Activated T-helper 1 cell treated with anti-CD3 and anti-CD28 coated beads, Interleukin-12 subunit alpha, Interleukin-12 subunit beta, Interleukin-2, Interleukin-4 antibody, amounts not matched to agents 30 ng/mL and 10 ng/mL and 1 ng/mL, durations not matched to agents 14 hours and 24 hours and 36 hours (primary cell): ENCODE measurements at regions of chr5 and their contacts with region 1.

Region 1: GRCh38 chr5:40679155-40679913 is 381 bp upstream of the PTGER4 start:
- DNase-seq: peak; percentile 91
- H3K4me3 Mint-ChIP-seq: peak overlapping the region; percentile 99
- H3K27ac Mint-ChIP-seq: peak overlapping the region; percentile 99
- H3K4me1 Mint-ChIP-seq: peaks cover 66% of the 10 kb centered on the region
- H3K27me3 Mint-ChIP-seq: no peaks in the 10 kb centered on the region

Region 2: DNA sequence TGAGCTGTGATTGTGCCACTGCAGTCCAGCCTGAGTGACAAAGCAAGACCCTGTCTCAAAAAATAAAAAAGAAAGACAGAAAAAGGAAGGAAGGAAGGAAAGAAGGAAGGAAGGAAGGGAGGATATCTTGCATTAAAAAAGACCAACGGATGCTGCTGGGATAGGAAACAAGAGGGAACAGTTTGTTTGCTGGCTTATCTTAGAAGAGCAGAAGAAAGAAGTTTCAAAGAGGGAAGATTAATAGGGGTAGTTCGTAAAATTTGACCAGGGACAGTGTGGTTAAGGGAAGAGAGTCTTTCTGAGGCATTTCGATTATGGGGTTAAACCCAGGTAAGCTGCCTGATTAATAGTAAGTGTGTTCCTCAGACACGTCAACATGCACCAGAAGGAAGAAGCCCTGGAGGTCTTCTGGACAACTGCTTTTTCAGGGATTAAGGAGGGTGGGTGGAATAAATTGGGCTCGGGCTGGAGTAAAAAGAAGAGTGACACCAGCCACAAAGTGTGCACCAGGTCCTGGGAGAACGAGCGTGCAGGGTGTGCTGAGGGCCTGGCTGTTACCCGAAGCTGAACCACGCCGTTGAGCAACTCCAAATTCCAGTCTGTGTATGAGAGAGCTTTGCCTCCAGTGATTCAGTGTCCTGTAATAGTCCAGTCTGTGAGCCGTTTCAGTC is 1484.7 kb before region 1 on chr5:
- intact Hi-C with region 1: loop called (anchors 5 kb)
- DNase-seq: no peak
- H3K4me3 Mint-ChIP-seq: peak overlapping the region; percentile 83
- H3K27ac Mint-ChIP-seq: peak overlapping the region; percentile 90
- H3K4me1 Mint-ChIP-seq: peaks cover 87% of the 10 kb centered on the region
- H3K27me3 Mint-ChIP-seq: no peaks in the 10 kb centered on the region

Region 3: GRCh38 chr5:40404613-40405012 is 274.7 kb before region 1 on chr5:
- intact Hi-C with region 1: loop called (anchors 1 kb)
- DNase-seq: peak; percentile 12
- H3K4me3 Mint-ChIP-seq: peak overlapping the region; percentile 59
- H3K27ac Mint-ChIP-seq: peak overlapping the region; percentile 99
- H3K4me1 Mint-ChIP-seq: peaks cover 86% of the 10 kb centered on the region
- H3K27me3 Mint-ChIP-seq: no peaks in the 10 kb centered on the region

Region 4: GRCh38 chr5:40437452-40437861 is 241.9 kb before region 1 on chr5:
- intact Hi-C with region 1: loop called (anchors 1 kb)
- DNase-seq: no peak
- H3K4me3 Mint-ChIP-seq: peak overlapping the region; percentile 13
- H3K27ac Mint-ChIP-seq: peak overlapping the region; percentile 71
- H3K4me1 Mint-ChIP-seq: peaks cover 84% of the 10 kb centered on the region
- H3K27me3 Mint-ChIP-seq: no peaks in the 10 kb centered on the region

Region 5: GRCh38 chr5:40557501-40557900 is 121.8 kb before region 1 on chr5:
- intact Hi-C with region 1: no loop called
- DNase-seq: no peak
- H3K4me3 Mint-ChIP-seq: no peak overlapping the region
- H3K27ac Mint-ChIP-seq: no peak overlapping the region
- H3K4me1 Mint-ChIP-seq: peaks cover 15% of the 10 kb centered on the region
- H3K27me3 Mint-ChIP-seq: no peaks in the 10 kb centered on the region

Region 6: DNA sequence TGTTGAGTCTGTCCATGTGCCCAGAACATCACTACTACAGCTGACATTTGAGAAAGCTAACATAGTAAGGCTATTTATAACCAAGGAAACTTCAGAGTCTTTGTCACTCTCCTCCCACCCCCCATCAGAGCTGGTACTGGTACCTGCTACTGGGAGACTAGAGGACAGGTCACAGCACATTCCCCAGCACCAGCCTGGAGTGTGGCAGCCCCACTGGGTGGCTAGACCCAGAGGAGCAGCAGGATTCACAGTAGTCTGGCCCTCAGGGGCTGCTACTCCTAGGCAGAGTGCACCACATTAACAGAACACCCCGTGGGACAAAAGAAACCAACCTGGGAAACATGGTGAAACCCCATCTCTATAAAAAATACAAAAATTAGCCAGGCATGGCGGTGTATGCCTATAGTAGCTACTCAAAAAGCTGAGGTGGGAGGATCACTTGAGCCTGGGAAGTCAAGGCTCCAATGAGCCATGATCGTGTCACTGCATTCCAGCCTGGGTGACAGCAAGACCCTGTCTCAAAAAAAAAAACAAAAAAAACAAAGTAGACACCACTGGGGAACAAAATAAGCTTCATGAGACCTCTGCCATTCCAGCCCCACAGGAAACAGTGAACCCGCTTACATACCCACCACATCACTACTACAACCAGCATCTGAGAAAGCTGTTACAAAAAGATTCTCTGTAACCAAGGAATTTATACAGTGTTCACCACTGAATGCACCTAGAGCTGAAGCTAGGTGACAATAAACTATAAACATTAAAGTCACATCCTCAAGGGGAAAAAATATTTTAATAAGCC is 25.9 kb before region 1 on chr5:
- intact Hi-C with region 1: loop called (anchors 1 kb)
- DNase-seq: no peak
- H3K4me3 Mint-ChIP-seq: peak overlapping the region; percentile 85
- H3K27ac Mint-ChIP-seq: peak overlapping the region; percentile 95
- H3K4me1 Mint-ChIP-seq: peaks cover 93% of the 10 kb centered on the region
- H3K27me3 Mint-ChIP-seq: no peaks in the 10 kb centered on the region